WTC11 (cell line): ENCODE measurements at regions of chr18 and their contacts with region 1.

Region 1: GRCh38 chr18:50203801-50204604 is 9.1 kb upstream of the MYO5B start:
- DNase-seq: peak; percentile 74
- ATAC-seq: peak; percentile 90
- H3K4me3 Mint-ChIP-seq: peak overlapping the region; percentile 62
- H3K27ac Mint-ChIP-seq: no peak overlapping the region
- H3K4me1 Mint-ChIP-seq: peaks cover 5% of the 10 kb centered on the region
- H3K27me3 Mint-ChIP-seq: peaks cover 17% of the 10 kb centered on the region
- CTCF ChIP-seq: peak; percentile 20; the same call in 1 of the 2 replicates

Region 2: DNA sequence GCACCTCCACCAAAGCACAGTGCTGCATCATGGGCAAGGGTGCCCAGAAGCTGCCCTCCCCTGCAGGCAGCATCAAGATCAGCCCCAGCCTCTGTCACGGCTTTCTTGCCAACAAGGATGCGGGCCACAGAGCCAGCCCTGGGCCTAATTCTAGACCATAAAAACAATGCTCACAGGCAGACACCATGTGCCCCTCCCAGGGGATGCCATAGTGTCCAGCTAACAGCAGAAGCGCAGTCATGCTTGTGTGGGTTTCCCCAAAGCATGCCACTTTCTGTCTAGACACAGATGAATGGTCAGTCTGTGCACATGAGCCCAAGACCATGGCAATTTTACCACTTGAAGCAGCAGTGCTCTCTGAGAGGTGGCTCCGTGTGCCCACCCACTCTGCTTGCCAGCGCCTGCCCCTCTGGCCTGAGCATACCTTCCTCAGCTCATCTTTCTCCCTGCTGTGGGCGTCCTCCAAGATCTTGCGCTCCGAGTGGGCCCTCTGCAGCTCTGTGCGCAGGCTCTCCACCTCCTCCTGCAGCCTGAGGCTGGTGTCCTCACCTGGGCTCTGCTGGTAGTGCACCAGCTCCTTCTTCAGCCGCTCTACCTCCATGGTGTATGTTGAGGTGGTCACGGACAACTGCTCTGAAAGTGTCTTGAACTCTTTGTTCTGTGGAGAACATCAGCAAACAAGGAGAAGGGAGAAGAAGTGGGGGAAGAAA is 309.3 kb before region 1 on chr18:
- CTCF ChIA-PET with region 1: interaction called, 11 read pairs
- POLR2A ChIA-PET with region 1: no interaction called
- DNase-seq: no peak
- ATAC-seq: peak; percentile 47; the same call in 1 of the 2 replicates
- H3K4me3 Mint-ChIP-seq: no peak overlapping the region
- H3K27ac Mint-ChIP-seq: no peak overlapping the region
- H3K4me1 Mint-ChIP-seq: peaks cover 13% of the 10 kb centered on the region
- H3K27me3 Mint-ChIP-seq: no peaks in the 10 kb centered on the region
- CTCF ChIP-seq: no peak

Region 3: DNA sequence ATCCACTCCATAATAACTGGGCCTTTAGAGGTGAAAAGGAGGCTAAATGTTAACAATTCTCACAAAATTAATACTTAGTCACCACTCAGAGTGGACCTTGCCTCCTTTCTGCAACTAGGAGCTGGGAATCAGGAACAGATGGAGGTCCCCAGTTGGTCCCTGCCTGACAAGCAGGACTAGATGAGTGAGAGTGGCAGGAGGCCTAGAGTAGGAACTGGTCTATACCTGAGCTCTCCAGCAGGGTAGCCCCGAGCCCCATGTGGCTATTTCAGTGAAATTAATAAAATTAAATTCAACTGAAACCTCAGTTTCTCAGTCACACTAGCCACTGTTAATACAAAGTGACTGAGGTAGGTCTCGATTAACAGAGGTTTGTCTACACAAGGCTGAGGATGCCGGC is 159.6 kb before region 1 on chr18:
- CTCF ChIA-PET with region 1: interaction called, 26 read pairs
- POLR2A ChIA-PET with region 1: no interaction called
- DNase-seq: peak; percentile 16
- ATAC-seq: peak; percentile 97
- H3K4me3 Mint-ChIP-seq: no peak overlapping the region
- H3K27ac Mint-ChIP-seq: no peak overlapping the region
- H3K4me1 Mint-ChIP-seq: peaks cover 9% of the 10 kb centered on the region
- H3K27me3 Mint-ChIP-seq: no peaks in the 10 kb centered on the region
- CTCF ChIP-seq: no peak

Region 4: DNA sequence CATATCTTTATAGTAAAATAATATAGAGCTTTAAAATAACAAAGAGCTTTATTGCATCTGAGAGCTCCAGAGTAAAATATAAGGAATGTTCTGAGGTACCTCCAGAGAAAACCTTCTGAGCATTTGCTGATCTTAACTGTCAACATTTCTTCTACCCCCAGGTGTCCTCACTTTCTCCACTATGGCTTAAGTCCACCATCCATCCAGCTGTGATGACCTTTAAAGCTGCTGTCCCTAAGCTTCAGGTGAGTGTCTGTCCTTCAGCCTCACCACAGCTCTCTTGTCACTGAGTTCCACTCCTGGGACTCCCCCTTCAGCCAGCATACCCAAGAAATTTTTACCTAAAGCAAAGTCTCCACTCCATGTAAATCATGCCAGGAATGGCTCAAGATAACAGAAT is 147.0 kb before region 1 on chr18:
- CTCF ChIA-PET with region 1: interaction called, 20 read pairs
- POLR2A ChIA-PET with region 1: no interaction called
- DNase-seq: no peak
- ATAC-seq: no peak
- H3K4me3 Mint-ChIP-seq: no peak overlapping the region
- H3K27ac Mint-ChIP-seq: no peak overlapping the region
- H3K4me1 Mint-ChIP-seq: no peaks in the 10 kb centered on the region
- H3K27me3 Mint-ChIP-seq: no peaks in the 10 kb centered on the region; the same call in 1 of the 2 replicates
- CTCF ChIP-seq: no peak

Region 5: GRCh38 chr18:50307738-50308470 is 103.9 kb after region 1 on chr18:
- CTCF ChIA-PET with region 1: no interaction called
- POLR2A ChIA-PET with region 1: no interaction called
- DNase-seq: peak; percentile 92
- ATAC-seq: peak; percentile 99
- H3K4me3 Mint-ChIP-seq: peak overlapping the region; percentile 80
- H3K27ac Mint-ChIP-seq: no peak overlapping the region
- H3K4me1 Mint-ChIP-seq: peaks cover 3% of the 10 kb centered on the region; the same call in 1 of the 2 replicates
- H3K27me3 Mint-ChIP-seq: peaks cover 73% of the 10 kb centered on the region
- CTCF ChIP-seq: no peak

Region 6: GRCh38 chr18:50356036-50356945 is 152.3 kb after region 1 on chr18:
- CTCF ChIA-PET with region 1: interaction called, 26 read pairs
- POLR2A ChIA-PET with region 1: no interaction called
- DNase-seq: no peak
- ATAC-seq: peak; percentile 74
- H3K4me3 Mint-ChIP-seq: no peak overlapping the region
- H3K27ac Mint-ChIP-seq: no peak overlapping the region
- H3K4me1 Mint-ChIP-seq: peaks cover 11% of the 10 kb centered on the region
- H3K27me3 Mint-ChIP-seq: peaks cover 28% of the 10 kb centered on the region
- CTCF ChIP-seq: no peak